ENCODE measurements at regions of chr9 and their contacts with region 1.

Region 1: GRCh38 chr9:90914868-90915483 is 113.4 kb downstream of the SYK start:
- DNase-seq: peak; percentile 66 to 72
- H3K4me3 ChIP-seq: no peak overlapping the region
- H3K27ac ChIP-seq: no peak overlapping the region
- H3K4me1 ChIP-seq: no peaks in the 10 kb centered on the region
- H3K27me3 ChIP-seq: no peaks in the 10 kb centered on the region
- CTCF ChIP-seq: peak; percentile 83 to 97 (median 90)
- POLR2A ChIP-seq: no peak

Region 2: GRCh38 chr9:91433180-91433579 is 518.2 kb after region 1 on chr9:
- intact Hi-C with region 1: loop called (anchors 10 kb)
- DNase-seq: no peak
- H3K4me3 ChIP-seq: no peak overlapping the region
- H3K27ac ChIP-seq: no peak overlapping the region
- H3K4me1 ChIP-seq: no peaks in the 10 kb centered on the region
- H3K27me3 ChIP-seq: no peaks in the 10 kb centered on the region
- CTCF ChIP-seq: peak; percentile 41 to 67 (median 60)
- POLR2A ChIP-seq: no peak

Region 3: DNA sequence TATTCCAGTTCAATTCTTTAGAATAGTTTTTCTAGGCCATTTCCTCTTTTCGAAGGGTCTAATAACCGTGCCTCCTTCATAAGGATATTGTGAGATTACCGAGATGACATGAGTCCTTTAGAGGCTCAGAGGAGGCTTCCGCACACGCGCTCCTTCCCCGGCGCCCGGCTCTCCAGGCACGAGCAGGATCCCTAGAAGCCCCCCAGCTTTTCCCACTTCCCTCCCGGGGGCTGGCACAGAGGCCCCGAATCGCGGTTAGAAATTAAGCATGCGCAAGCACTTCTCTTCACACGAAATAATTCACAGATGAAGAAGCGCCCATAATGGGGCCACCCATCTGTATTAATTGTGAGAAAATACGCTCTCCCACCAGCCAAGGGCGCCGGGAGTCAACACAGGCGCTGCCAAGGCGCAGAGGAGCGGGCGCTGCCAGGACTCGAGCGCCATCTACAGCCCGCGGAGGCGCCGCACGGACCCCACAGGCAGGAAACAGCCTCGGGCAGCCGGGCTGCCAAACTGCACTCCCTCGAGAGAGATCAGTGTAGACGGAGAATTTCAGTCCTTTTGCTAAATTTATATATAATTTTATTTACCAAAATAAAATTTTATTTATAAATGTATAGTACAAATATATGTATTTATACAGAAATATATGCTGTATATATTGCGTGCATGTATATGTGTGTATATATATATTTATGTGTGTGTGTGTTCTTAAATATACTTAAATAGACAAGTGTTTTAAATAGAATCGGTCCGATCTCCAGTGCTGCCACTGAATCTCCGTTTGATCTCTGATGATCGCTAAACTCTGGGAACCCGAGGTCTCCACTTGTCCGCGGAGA is 766.7 kb after region 1 on chr9:
- intact Hi-C with region 1: loop called (anchors 10 kb)
- DNase-seq: peak; percentile 74 to 77
- H3K4me3 ChIP-seq: no peak overlapping the region
- H3K27ac ChIP-seq: no peak overlapping the region
- H3K4me1 ChIP-seq: no peaks in the 10 kb centered on the region
- H3K27me3 ChIP-seq: no peaks in the 10 kb centered on the region
- CTCF ChIP-seq: peak; percentile 78 to 94 (median 88)
- POLR2A ChIP-seq: no peak

Measured in uterus (tissue), 4 donors.